Activated CD4-positive, alpha-beta T cell treated with anti-CD3 and anti-CD28 coated beads for 36 hours (primary cell): ENCODE measurements at regions of chr21 and their contacts with region 1.

Region 1: DNA sequence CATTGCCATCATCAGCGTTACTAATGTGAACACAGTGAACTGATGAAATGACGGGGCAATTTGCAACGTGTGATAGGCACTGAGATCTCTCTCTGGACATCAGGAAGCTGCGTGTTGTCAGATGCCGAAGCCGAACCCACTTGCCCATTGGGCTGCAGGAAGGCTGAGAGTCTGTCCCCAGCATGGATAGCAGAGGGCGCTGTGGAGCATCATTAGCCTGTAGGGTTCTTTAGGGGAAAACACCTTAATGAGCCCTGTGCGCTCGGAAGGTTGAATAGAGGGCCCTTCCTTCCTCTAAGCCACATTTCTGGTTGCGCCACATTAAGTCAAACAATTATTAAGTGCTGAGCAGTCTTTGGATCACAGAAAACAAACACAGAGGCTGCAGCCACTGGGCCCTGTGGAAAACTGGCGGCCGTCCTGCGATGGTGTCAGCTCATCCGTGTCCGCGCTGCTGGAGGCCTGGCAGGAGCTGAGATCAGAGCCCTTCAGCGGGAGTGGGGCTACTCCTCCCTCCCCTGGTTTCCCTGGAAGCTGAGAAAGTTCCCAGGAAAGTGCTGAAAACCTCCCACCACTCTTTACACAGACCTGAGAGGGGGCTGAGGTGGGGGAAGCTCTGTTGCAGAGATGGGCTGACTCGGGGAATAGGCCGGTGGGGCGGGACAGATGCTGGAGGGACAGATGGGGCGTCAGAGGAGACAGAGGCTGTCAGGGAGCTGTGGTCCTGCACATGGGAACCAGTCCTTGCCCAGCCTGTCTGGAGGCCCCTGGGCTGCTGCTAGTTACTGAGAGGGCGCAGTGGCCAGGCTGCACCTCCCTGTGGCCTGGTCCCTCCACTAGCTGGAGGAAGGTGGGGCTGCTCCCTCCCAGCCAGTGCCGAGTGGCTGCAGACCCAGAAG is 12.7 kb downstream of the TFF2 start:
- DNase-seq: peak; percentile 93
- ATAC-seq: peak; percentile 97
- H3K4me3 Mint-ChIP-seq: peak overlapping the region; percentile 6
- H3K27ac Mint-ChIP-seq: peak overlapping the region; percentile 69
- H3K4me1 Mint-ChIP-seq: peaks cover 21% of the 10 kb centered on the region
- H3K27me3 Mint-ChIP-seq: peaks cover 2% of the 10 kb centered on the region

Region 2: GRCh38 chr21:41186662-41187539 is 1151.2 kb before region 1 on chr21:
- CTCF ChIA-PET with region 1: no interaction called
- POLR2A ChIA-PET with region 1: no interaction called
- intact Hi-C with region 1: no loop called
- DNase-seq: no peak
- ATAC-seq: no peak
- H3K4me3 Mint-ChIP-seq: no peak overlapping the region
- H3K27ac Mint-ChIP-seq: no peak overlapping the region
- H3K4me1 Mint-ChIP-seq: no peaks in the 10 kb centered on the region
- H3K27me3 Mint-ChIP-seq: peaks cover 2% of the 10 kb centered on the region

Region 3: DNA sequence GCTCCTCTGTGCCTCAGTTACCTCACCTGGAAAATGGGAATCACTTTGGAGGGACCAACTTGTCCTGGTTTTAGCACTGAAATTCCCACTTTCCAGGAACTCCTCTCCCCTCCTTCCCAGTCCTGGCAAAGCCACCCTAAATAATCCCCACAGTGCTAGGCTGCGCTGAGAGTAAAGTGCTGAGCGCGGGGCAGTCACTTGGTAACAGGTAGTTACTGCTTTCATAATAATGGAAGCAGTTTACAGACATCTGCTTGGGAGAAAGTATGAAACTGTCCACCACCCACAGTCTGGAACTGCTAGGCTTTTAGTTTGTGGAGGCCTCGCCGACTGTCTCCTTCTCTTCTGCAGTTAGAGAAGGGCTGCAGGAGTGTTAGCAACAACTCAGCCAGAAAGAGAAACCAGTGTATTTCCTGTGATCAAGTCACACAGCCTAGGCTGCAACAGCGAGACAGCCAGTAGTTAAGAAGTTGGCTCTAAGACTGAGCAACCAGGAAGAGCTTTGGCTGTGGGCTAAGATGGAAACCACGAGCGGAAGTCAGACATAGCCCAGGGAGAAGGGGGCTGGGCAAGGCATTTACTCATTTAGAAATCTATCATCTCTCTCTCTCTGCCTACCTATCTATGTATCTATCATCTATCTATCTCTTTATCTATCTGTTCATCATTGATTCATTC is 150.0 kb before region 1 on chr21:
- CTCF ChIA-PET with region 1: no interaction called
- POLR2A ChIA-PET with region 1: no interaction called
- intact Hi-C with region 1: no loop called
- DNase-seq: peak; percentile 88
- ATAC-seq: peak; percentile 93
- H3K4me3 Mint-ChIP-seq: peak overlapping the region; percentile 57
- H3K27ac Mint-ChIP-seq: peak overlapping the region; percentile 95
- H3K4me1 Mint-ChIP-seq: peaks cover 65% of the 10 kb centered on the region
- H3K27me3 Mint-ChIP-seq: peaks cover 2% of the 10 kb centered on the region

Region 4: DNA sequence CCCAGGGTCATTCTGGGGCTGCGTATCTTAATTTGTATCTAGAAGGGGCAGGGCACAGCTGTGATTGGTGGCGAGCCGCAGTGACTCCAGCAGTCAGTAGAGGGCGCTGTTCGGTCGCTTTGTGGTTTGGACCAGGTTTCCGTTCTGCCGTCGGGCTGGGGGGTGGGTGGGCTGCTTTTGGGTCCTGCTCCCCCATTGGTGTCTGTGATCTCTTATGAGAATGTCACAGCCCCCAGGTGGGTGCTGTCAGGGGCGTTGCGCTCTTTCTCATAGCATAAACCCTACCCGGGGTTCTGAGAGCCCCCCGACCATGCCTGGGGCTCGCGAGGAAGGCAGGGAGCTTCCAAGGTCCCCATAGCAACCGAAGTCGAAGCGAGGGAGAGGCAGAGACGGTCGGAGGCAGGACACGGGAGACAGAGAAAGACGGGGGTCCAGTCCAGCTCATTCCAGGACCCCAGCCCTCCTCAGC is 28.3 kb before region 1 on chr21:
- CTCF ChIA-PET with region 1: interaction called, 11 read pairs
- POLR2A ChIA-PET with region 1: no interaction called
- intact Hi-C with region 1: no loop called
- DNase-seq: peak; percentile 88
- ATAC-seq: peak; percentile 89
- H3K4me3 Mint-ChIP-seq: no peak overlapping the region
- H3K27ac Mint-ChIP-seq: no peak overlapping the region
- H3K4me1 Mint-ChIP-seq: no peaks in the 10 kb centered on the region
- H3K27me3 Mint-ChIP-seq: peaks cover 2% of the 10 kb centered on the region

Region 5: GRCh38 chr21:42369821-42370220 is 31.7 kb after region 1 on chr21:
- CTCF ChIA-PET with region 1: interaction called, 11 read pairs
- POLR2A ChIA-PET with region 1: interaction called, 3 read pairs
- intact Hi-C with region 1: loop called (anchors 1 to 5 kb)
- DNase-seq: no peak
- ATAC-seq: no peak
- H3K4me3 Mint-ChIP-seq: no peak overlapping the region
- H3K27ac Mint-ChIP-seq: peak overlapping the region; percentile 8
- H3K4me1 Mint-ChIP-seq: peaks cover 43% of the 10 kb centered on the region
- H3K27me3 Mint-ChIP-seq: no peaks in the 10 kb centered on the region

Region 6: GRCh38 chr21:42381334-42381984 is 43.4 kb after region 1 on chr21:
- CTCF ChIA-PET with region 1: interaction called, 17 read pairs
- POLR2A ChIA-PET with region 1: interaction called, 3 read pairs
- intact Hi-C with region 1: no loop called
- DNase-seq: peak; percentile 69
- ATAC-seq: peak; percentile 70
- H3K4me3 Mint-ChIP-seq: no peak overlapping the region
- H3K27ac Mint-ChIP-seq: no peak overlapping the region
- H3K4me1 Mint-ChIP-seq: peaks cover 16% of the 10 kb centered on the region
- H3K27me3 Mint-ChIP-seq: no peaks in the 10 kb centered on the region

Region 7: DNA sequence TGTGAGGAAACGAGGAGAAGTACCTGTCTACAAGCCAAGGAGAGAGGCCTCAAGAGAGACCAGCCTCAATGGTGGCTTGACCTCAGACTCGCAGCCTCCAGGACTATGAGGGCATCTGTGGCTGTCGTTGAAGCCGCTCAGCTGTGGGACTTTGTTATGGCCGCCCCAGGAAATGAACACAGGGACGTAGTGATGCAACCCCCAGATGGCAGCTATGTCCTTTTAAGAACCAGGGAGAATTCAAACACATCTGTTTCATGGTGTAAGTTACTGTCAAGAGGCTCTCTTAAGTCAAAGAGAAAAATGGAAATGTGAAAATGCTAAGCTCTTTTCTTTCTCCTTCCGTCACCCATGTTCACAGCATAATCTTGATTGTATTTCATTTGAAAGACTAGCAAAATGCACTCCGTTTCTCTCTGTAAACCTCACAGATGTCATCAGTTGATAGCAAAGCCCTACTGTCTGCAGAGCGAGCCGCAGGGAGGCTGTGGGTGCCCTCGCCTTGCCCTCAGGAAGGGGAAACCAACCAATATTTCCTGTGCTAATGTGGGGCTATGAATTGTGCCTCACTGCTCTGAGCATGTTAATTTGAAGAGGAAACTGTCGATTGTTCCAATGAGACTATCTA is 86.9 kb after region 1 on chr21:
- CTCF ChIA-PET with region 1: interaction called, 4 read pairs
- POLR2A ChIA-PET with region 1: no interaction called
- intact Hi-C with region 1: loop called in 1 of 2 experiments (anchors 5 kb)
- DNase-seq: peak; percentile 78
- ATAC-seq: peak; percentile 55
- H3K4me3 Mint-ChIP-seq: peak overlapping the region; percentile 64
- H3K27ac Mint-ChIP-seq: peak overlapping the region; percentile 87
- H3K4me1 Mint-ChIP-seq: peaks cover 74% of the 10 kb centered on the region
- H3K27me3 Mint-ChIP-seq: no peaks in the 10 kb centered on the region

Region 8: GRCh38 chr21:42818328-42818749 is 480.3 kb after region 1 on chr21:
- CTCF ChIA-PET with region 1: no interaction called
- POLR2A ChIA-PET with region 1: no interaction called
- intact Hi-C with region 1: loop called in 1 of 2 experiments (anchors 10 kb)
- DNase-seq: peak; percentile 82
- ATAC-seq: peak; percentile 89
- H3K4me3 Mint-ChIP-seq: no peak overlapping the region
- H3K27ac Mint-ChIP-seq: no peak overlapping the region
- H3K4me1 Mint-ChIP-seq: no peaks in the 10 kb centered on the region
- H3K27me3 Mint-ChIP-seq: no peaks in the 10 kb centered on the region